Endothelial cell of umbilical vein (primary cell): ENCODE measurements at regions of chr6 and their contacts with region 1.

Region 1: DNA sequence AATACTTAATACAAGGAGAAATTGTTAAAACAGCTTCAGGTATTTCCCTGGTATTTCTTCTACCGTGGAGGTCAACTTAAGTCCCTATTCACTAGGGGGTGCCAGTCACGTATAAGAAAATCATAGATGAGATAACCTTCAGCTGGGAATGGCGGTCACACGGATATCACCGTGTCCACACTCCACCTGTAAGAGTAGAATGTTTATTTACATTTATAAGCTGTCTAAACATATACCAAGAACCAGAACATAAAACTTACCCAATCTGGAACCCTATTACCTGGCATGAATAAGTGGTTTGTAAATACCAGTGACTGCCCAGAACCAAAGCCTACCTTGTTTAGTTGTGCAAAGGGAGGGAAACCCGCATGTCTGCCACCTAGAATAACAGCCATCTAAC is 1.9 kb upstream of the ELOVL4 start:
- DNase-seq: peak; percentile 53
- H3K4me3 ChIP-seq: no peak overlapping the region
- H3K27ac ChIP-seq: no peak overlapping the region
- H3K4me1 ChIP-seq: peaks cover 13% of the 10 kb centered on the region
- H3K27me3 ChIP-seq: peaks cover 8 to 31% of the 10 kb centered on the region in 2 experiments
- CTCF ChIP-seq: peak; percentile 41 to 49
- POLR2A ChIP-seq: no peak

Region 2: GRCh38 chr6:80088637-80089036 is 139.4 kb after region 1 on chr6:
- CTCF ChIA-PET with region 1: interaction called, 82 read pairs
- POLR2A ChIA-PET with region 1: no interaction called
- dilution Hi-C with region 1: no loop called
- intact Hi-C with region 1: no loop called
- DNase-seq: no peak
- H3K4me3 ChIP-seq: no peak overlapping the region
- H3K27ac ChIP-seq: no peak overlapping the region
- H3K4me1 ChIP-seq: no peaks in the 10 kb centered on the region
- H3K27me3 ChIP-seq: peaks cover 6 to 15% of the 10 kb centered on the region in 2 experiments
- CTCF ChIP-seq: no peak
- POLR2A ChIP-seq: no peak

Region 3: DNA sequence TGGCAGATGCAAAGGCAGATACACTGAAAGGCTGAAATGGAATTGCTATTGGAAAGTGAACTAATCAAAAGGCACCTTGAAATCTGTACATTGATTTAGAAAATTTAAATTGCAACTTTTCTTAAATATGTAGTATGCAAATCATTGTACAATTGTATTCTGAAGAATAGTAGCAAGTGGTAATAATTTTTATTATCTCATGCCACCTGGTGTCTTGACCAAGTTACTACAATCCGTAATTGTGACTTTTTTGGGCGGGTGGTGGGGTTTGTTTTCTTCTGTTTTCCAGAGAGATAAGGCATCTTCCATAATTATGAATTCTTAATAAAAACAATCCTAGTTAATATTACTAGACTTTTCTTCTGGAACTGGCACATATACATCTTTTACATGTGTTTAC is 144.8 kb after region 1 on chr6:
- CTCF ChIA-PET with region 1: interaction called, 82 read pairs
- POLR2A ChIA-PET with region 1: no interaction called
- dilution Hi-C with region 1: no loop called
- intact Hi-C with region 1: loop called (anchors 1 kb)
- DNase-seq: peak; percentile 38
- H3K4me3 ChIP-seq: no peak overlapping the region
- H3K27ac ChIP-seq: no peak overlapping the region
- H3K4me1 ChIP-seq: no peaks in the 10 kb centered on the region
- H3K27me3 ChIP-seq: peaks cover 5 to 18% of the 10 kb centered on the region in 2 experiments
- CTCF ChIP-seq: peak; percentile 32 to 33
- POLR2A ChIP-seq: no peak